Activated CD4-positive, alpha-beta T cell treated with anti-CD3 and anti-CD28 coated beads for 36 hours (primary cell): ENCODE measurements at regions of chr12 and their contacts with region 1.

Region 1: DNA sequence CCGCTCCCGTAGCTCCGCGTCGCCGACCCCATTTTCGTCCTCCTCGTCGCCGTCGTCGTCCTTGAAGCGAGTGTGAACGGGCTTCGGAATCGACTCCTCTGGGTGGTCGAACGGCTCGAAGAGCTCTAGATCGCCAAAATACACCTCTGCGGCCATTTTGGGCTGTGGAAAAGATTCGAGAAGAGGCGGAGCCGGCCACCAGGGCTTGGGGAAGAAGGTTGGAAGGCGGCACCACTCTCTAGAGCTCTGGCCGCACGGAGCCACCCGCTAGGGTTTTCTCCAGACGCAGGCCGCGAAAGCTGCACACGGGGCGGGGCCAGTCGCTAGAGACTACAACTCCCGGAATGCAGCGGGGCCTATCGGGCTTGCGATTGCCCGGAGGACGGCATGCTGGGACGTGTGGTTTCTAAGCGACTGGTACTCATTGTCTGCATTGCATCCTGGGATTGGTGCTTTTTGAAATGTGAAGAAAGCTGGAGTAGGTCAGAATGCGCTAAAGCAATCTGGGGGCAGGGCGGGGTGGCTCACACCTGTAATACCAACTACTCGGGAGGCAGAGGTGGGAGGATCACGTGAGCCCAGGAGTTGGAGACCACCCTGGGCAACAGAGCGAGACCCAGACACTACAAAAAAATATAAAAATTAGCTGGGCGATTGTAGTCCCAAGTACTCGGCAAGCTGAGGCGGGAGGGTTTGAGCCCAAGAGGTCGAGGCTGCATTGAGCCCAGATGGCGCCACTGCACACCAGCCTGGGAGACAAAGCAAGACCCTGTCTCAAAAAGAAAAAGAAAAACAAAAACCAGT is at the start of gene ZCCHC8:
- DNase-seq: peak; percentile 99
- ATAC-seq: peak; percentile 95
- H3K4me3 Mint-ChIP-seq: peak within 1 kb of the TSS; percentile 97
- H3K27ac Mint-ChIP-seq: peak within 1 kb of the TSS; percentile 98
- H3K4me1 Mint-ChIP-seq: peaks cover 32% of the 10 kb centered on the region
- H3K27me3 Mint-ChIP-seq: no peaks in the 10 kb centered on the region
- total RNA-seq, gene ZCCHC8: 34.7 to 39.1 TPM

Region 2: GRCh38 chr12:122399592-122400373 is 101.1 kb before region 1 on chr12:
- CTCF ChIA-PET with region 1: interaction called, 14 read pairs
- POLR2A ChIA-PET with region 1: interaction called, 9 read pairs
- intact Hi-C with region 1: loop called in 1 of 2 experiments (anchors 1 kb)
- DNase-seq: peak; percentile 73
- ATAC-seq: peak; percentile 37
- H3K4me3 Mint-ChIP-seq: peak overlapping the region; percentile 43
- H3K27ac Mint-ChIP-seq: peak overlapping the region; percentile 86
- H3K4me1 Mint-ChIP-seq: peaks cover 50% of the 10 kb centered on the region
- H3K27me3 Mint-ChIP-seq: no peaks in the 10 kb centered on the region

Region 3: DNA sequence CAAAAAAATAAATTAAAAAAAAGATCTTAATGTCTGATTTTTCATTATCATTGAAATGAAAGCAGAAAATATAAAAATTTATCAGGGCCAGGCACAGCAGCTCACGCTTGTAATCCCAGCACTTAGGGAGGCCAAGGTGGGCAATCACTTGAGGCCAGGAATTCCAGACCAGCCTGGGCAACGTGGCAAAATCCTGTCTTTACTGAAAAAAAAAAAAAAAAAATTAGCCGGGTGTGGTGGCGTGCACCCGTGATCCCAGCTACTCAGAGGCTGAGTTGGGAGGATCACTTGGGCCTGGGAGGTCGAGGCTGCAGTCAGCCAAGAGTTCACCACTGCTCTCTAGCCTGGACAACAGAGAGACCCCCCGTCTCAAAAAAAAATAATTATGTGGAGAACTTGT is 40.8 kb before region 1 on chr12:
- CTCF ChIA-PET with region 1: no interaction called
- POLR2A ChIA-PET with region 1: no interaction called
- intact Hi-C with region 1: no loop called
- DNase-seq: no peak
- ATAC-seq: no peak
- H3K4me3 Mint-ChIP-seq: no peak overlapping the region
- H3K27ac Mint-ChIP-seq: no peak overlapping the region
- H3K4me1 Mint-ChIP-seq: peaks cover 4% of the 10 kb centered on the region
- H3K27me3 Mint-ChIP-seq: no peaks in the 10 kb centered on the region

Region 4: DNA sequence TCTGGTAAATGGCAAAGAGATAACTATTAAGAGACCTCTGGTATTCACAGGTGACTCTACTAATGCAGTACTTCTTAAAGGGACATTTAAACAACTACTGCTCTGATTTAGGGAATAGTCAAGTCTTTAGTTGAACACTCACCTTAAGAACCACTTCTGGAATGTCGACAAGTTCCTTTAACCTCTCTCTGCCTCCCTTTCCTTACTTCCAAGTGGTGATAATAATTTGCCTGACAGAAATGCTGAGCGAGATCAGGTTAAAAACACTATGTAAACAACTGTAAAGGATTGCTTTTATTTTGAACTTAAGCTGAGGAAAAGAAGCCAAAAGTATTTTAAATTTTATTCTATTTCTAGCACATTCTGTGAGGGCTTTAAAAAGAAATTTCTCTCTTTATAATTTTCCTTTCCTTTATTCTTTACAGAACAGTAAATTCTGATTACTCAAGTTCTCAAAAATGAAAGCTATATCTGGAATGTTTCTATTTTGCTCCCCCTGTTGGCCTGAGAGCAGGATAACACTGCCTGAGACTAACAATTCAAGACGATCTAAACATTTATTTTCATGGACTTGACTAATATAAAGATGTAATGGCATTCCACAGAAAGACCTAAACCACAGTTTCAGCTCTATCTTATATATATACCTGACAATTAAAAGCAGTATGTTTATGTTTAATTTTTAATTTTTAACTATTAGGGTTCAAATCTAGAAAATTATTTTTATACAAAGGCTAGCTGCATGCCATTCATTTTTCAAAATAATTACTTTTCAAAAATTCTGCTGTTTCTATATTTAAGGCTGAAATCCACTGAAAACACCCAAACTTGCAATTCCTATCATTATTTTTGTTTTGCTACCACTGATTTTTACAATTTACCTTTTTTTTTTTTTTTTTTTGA is 29.3 kb before region 1 on chr12:
- CTCF ChIA-PET with region 1: interaction called, 10 read pairs
- POLR2A ChIA-PET with region 1: interaction called, 3 read pairs
- intact Hi-C with region 1: no loop called
- DNase-seq: no peak
- ATAC-seq: peak; percentile 40
- H3K4me3 Mint-ChIP-seq: no peak overlapping the region
- H3K27ac Mint-ChIP-seq: no peak overlapping the region
- H3K4me1 Mint-ChIP-seq: peaks cover 28% of the 10 kb centered on the region
- H3K27me3 Mint-ChIP-seq: no peaks in the 10 kb centered on the region

Region 5: GRCh38 chr12:122646517-122647217 is 145.8 kb after region 1 on chr12:
- CTCF ChIA-PET with region 1: no interaction called
- POLR2A ChIA-PET with region 1: interaction called, 13 read pairs
- intact Hi-C with region 1: no loop called
- DNase-seq: peak; percentile 81
- ATAC-seq: peak; percentile 97
- H3K4me3 Mint-ChIP-seq: peak overlapping the region; percentile 54
- H3K27ac Mint-ChIP-seq: peak overlapping the region; percentile 79
- H3K4me1 Mint-ChIP-seq: peaks cover 18% of the 10 kb centered on the region
- H3K27me3 Mint-ChIP-seq: peaks cover 2% of the 10 kb centered on the region